Breast epithelium (tissue), 4 donors: ENCODE measurements at regions of chr19 and their contacts with region 1.

Region 1: DNA sequence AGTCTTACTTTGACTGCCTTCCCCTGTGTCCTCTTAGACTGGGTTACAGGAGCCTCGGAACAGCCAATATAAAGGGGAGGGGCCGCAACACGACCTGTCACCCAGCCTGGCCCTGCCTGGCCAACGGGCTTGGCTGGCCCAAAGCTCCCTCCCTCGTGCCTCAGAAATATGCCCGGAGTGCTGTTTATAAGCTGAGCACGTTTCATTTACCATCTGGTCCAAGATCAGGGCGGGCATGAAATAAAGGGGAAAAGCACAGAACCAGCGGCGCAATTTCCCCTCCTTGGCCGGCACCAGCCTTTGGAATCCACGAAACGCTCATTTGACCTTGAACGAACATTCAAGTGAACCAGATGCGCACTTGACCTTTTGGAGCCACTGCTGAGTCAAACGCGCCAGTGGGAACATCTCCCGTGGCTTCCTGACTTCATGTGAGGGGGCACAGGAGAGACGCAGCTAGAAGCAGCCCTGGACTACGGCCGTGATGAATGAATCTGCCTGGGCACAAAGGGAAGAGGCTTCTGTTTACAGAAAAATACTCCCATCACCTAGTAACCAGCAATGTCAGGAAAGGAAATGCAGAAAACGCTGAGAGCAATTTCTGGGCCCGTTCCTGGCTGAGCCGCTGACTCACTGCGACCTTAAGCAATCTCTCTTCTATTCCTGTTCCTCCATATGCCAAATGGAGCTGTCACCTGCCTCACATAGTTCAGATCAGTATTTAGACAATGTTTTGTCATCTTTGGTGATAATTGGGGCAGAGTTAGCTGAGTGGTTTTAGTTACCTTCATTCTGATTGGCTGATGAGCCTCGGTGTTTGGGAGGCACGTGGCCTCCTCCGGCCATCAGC is 53.3 kb downstream of the RFX2 start:
- DNase-seq: peak; percentile 78 to 90
- H3K4me3 ChIP-seq: peak overlapping the region; percentile 0 to 54 (median 16)
- H3K27ac ChIP-seq: peak overlapping the region; percentile 95 to 99
- H3K4me1 ChIP-seq: peaks cover 11 to 17% of the 10 kb centered on the region in 2 donors
- H3K27me3 ChIP-seq: no peaks in the 10 kb centered on the region
- CTCF ChIP-seq: no peak
- POLR2A ChIP-seq: peak; percentile 76

Region 2: GRCh38 chr19:4319067-4319718 is 1737.8 kb before region 1 on chr19:
- intact Hi-C with region 1: loop called (anchors 5 kb)
- DNase-seq: no peak
- H3K4me3 ChIP-seq: no peak overlapping the region
- H3K27ac ChIP-seq: no peak overlapping the region
- H3K4me1 ChIP-seq: no peaks in the 10 kb centered on the region
- H3K27me3 ChIP-seq: no peaks in the 10 kb centered on the region
- CTCF ChIP-seq: no peak
- POLR2A ChIP-seq: no peak

Region 3: DNA sequence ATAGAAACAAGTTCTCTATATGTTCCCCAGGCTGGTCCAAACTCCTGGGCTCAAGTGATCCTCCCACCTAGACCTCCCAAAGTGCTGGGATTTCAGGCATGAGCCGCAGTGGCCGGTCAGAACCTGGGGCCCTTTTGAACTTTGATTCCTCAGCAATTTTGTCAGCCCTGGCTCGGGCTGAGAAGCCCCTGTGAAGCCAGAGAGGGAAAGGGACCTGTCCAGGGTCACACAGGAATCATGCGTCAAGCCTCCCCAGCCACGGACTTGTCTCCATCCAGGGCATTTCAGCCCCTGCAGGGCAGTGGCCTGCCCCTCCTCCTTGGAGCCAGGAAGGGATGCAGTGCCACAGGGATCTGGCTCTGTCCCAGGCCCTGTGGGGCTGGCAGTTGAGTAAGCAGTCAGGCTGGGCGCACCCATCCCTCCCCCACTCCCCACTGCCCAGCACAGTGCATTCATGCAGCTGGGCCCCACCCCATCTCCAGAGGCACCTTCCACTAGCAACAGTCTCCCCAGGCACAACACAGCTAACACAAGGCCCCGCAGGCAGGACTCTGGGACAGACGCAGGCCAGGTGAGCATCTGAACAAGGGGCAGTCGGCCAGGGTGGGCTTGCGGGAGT is 143.2 kb before region 1 on chr19 and contains the start of gene CAPS:
- intact Hi-C with region 1: no loop called
- DNase-seq: peak; percentile 37 to 63
- H3K4me3 ChIP-seq: peak within 1 kb of the TSS; percentile 0 to 44 (median 18)
- H3K27ac ChIP-seq: peak within 1 kb of the TSS; percentile 67 to 72
- H3K4me1 ChIP-seq: peaks cover 12 to 17% of the 10 kb centered on the region in 2 donors
- H3K27me3 ChIP-seq: no peaks in the 10 kb centered on the region
- CTCF ChIP-seq: no peak
- POLR2A ChIP-seq: no peak
- total RNA-seq, gene CAPS: 9.4 to 19.0 (median 16.4) TPM

Region 4: DNA sequence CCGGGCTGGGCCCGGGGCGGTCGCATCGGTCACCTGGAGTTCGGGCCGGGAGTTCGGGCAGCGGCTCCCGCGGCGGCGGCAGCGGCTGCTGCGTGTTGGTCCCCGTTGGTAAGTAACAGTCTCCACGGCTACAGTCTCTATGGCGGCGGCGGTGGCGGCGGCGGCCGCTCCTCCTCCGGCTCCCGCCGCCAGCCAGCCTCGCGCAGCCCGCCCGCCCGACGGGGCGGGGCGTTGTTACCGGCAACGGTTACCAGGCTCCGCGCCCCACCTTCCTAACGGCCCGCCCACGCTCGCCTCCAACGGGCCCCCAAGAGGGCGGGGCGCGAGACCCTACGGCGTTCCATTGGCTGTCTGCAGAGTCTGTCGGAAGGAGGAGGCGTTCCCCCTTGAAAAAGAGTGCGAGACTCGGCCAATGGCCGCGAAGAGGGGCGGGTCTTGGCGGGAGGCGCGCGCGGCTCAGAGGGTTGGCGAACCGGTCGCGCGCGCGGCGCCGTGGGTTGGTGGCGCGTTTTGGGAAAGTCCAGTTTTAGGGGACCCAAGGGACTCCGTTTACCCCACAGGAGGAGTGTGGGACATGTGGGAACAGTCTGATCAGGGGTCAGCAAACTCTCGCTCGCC is 53.4 kb after region 1 on chr19 and contains the start of gene RFX2:
- intact Hi-C with region 1: loop called (anchors 5 kb)
- DNase-seq: peak; percentile 99 to 100
- H3K4me3 ChIP-seq: peak within 1 kb of the TSS; percentile 78
- H3K27ac ChIP-seq: peak within 1 kb of the TSS; percentile 83 to 87
- H3K4me1 ChIP-seq: peaks cover 0 to 9% of the 10 kb centered on the region in 2 donors
- H3K27me3 ChIP-seq: no peaks in the 10 kb centered on the region
- CTCF ChIP-seq: no peak
- POLR2A ChIP-seq: peak; percentile 55
- total RNA-seq, gene RFX2: 6.1 to 16.2 (median 9.2) TPM